SK-N-SH (cell line): ENCODE measurements at regions of chr7 and their contacts with region 1.

Region 1: DNA sequence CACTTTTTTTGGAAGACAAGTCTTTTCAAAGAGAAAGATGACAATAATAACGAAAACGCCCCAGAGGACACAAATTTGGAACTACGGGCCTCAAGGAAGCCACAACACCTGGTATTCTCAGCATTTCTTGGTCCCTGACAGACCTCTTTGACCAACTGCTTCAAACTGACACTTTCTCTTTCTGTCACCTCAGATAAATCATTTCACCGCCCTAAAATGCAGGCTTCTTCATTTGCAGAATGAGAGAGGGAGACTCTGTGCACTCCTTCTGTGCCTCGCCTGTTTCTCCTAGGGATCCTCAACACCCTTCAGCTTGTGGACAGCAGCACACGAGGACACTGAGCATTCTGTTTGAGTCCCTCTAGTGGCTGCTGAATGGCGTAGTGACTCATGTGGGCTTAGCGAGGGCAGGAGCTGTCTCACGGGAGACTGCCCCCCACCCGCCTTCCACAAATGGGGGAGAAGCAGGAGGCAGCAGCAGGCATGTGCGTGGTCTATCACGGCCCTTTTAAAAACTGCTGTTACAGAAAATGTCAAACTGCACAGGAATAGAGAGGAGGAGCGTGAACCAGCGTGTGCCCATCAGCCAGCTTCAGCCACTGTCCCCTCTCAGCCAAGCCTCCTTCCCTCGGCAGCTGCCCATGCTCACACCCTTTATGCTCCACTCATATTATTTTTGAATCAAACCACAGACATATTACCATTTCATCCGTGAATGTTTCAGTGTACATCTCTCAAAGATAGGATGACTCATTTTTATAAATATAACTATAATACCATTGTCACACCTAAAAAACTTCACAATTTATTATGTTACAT is 41.4 kb downstream of the GSDME start:
- DNase-seq: peak; percentile 58
- H3K4me3 ChIP-seq: no peak overlapping the region
- H3K27ac ChIP-seq: no peak overlapping the region; a peak in 1 of 4 replicates
- H3K4me1 ChIP-seq: no peaks in the 10 kb centered on the region
- H3K27me3 ChIP-seq: no peaks in the 10 kb centered on the region
- CTCF ChIP-seq: peak; percentile 55
- EP300 ChIP-seq: no peak
- RAD21 ChIP-seq: peak; percentile 42

Region 2: DNA sequence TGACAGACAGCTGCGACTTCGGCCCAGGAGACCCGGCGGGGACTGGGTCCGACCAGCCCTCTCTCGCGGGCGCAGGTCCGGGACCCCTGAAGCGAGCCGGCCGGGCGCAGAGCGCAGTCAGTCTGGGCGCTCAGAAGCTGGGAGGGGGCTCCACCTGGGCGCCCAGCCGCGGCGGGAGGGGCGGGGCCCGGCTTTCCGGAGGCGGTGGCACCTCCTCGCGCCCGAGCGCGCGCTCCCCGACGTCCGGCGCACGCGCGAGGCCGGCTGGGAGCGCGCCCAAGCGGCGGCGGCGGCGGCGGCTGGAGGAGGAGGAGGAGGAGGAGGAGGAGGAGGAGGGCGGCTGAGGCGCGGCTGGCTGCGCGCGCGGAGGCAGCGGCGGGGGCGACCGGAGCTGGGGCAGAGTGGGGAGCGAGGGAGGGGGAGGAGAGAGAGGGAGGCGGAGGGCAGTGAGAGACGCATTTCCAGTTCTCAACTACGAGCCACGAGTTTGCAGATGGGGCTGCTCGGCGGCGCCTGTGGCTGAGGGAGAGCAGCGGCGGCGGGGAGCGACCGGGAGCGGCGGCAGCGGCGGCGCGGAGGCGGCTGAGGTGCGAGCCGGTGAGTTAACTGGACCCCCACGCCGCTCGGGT is 142.8 kb before region 1 on chr7 and contains the start of gene PALS2:
- CTCF ChIA-PET with region 1: no interaction called
- POLR2A ChIA-PET with region 1: no interaction called
- DNase-seq: peak; percentile 95
- H3K4me3 ChIP-seq: peak within 1 kb of the TSS; percentile 93 to 98
- H3K27ac ChIP-seq: peak within 1 kb of the TSS; percentile 20 to 61; a peak in 3 of 4 replicates
- H3K4me1 ChIP-seq: peaks cover 0 to 31% of the 10 kb centered on the region in 2 experiments; a peak in 2 of 4 replicates
- H3K27me3 ChIP-seq: peaks cover 12% of the 10 kb centered on the region; the same call in 1 of the 2 replicates
- CTCF ChIP-seq: no peak; the same call in 1 of the 2 replicates
- EP300 ChIP-seq: 0 out of 4 replicates have a peak, but pooled peaks of 1 of the 2 experiments have one; percentile 11
- RAD21 ChIP-seq: no peak
- polyA plus RNA-seq, gene PALS2: 6.1 and 6.9 TPM in 2 replicates

Region 3: GRCh38 chr7:24701261-24702235 is 14.3 kb before region 1 on chr7:
- CTCF ChIA-PET with region 1: interaction called, 14 read pairs
- POLR2A ChIA-PET with region 1: no interaction called
- DNase-seq: no peak
- H3K4me3 ChIP-seq: no peak overlapping the region
- H3K27ac ChIP-seq: peak overlapping the region; percentile 68 to 79
- H3K4me1 ChIP-seq: peaks cover 30 to 32% of the 10 kb centered on the region in 2 experiments
- H3K27me3 ChIP-seq: no peaks in the 10 kb centered on the region
- CTCF ChIP-seq: no peak
- EP300 ChIP-seq: peak; percentile 34 to 76; a peak in 2 of 4 replicates
- RAD21 ChIP-seq: no peak

Region 4: GRCh38 chr7:24781106-24781505 is 65.2 kb after region 1 on chr7:
- CTCF ChIA-PET with region 1: no interaction called
- POLR2A ChIA-PET with region 1: no interaction called
- DNase-seq: no peak
- H3K4me3 ChIP-seq: no peak overlapping the region
- H3K27ac ChIP-seq: no peak overlapping the region
- H3K4me1 ChIP-seq: 0 out of 4 replicates have a peak, but pooled peaks cover 0 to 8% of the 10 kb centered on the region in 2 experiments
- H3K27me3 ChIP-seq: no peaks in the 10 kb centered on the region
- CTCF ChIP-seq: no peak
- EP300 ChIP-seq: no peak
- RAD21 ChIP-seq: no peak